PC-9 (cell line): ENCODE measurements at regions of chr19 and their contacts with region 1.

Region 1: DNA sequence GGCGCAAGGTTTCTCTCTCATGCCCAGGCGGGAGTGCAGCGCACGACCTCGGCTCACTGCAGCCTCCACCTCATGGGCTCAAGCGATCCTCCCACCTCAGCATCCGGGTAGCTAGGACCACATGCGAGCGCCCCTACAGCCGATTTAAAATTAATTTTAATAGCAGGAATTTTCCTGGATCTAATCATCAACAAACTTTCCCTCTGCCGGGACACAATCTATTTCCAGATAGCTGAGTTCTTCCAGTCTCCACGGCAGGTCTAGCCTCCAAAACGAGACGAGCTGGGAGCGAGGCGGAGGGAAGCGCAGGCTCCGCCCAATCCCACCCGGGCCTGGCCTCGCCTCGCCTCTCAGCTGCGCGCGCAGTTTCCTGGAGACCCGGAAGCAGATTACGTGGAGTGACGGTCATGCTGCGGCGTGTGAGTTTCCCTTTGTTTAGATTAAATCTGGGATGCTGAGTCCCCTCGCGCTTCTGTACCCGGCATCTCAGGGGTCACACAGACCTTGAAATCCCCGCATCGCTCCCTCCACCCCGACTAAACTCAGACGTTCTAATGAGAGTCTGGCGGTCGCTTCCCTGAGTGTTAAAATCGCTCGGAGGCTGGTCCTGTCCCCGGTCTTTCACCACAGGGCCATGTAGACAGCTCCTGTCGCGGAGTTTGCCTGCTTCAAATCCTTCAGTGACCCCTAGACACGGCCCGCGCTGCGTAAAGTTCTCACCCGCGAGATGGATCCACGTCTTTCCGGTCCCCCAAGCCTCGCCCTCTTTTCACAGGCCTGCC is at the start of gene ZNF880:
- DNase-seq: peak; percentile 78 to 95
- H3K4me3 ChIP-seq: peak within 1 kb of the TSS; percentile 78
- H3K27ac ChIP-seq: peak within 1 kb of the TSS; percentile 67
- H3K4me1 ChIP-seq: 0 out of 2 replicates have a peak, but pooled peaks cover 8% of the 10 kb centered on the region
- H3K27me3 ChIP-seq: no peaks in the 10 kb centered on the region
- CTCF ChIP-seq: no peak
- total RNA-seq, gene ZNF880: 20.8 and 27.3 TPM in 2 replicates

Region 2: GRCh38 chr19:52269338-52270261 is 100.2 kb before region 1 on chr19 and contains the start of gene ZNF766:
- CTCF ChIA-PET with region 1: no interaction called
- POLR2A ChIA-PET with region 1: no interaction called
- intact Hi-C with region 1: loop called (anchors 5 kb)
- DNase-seq: peak; percentile 89 to 98
- H3K4me3 ChIP-seq: peak within 1 kb of the TSS; percentile 81
- H3K27ac ChIP-seq: peak within 1 kb of the TSS; percentile 81
- H3K4me1 ChIP-seq: 0 out of 2 replicates have a peak, but pooled peaks cover 4% of the 10 kb centered on the region
- H3K27me3 ChIP-seq: no peaks in the 10 kb centered on the region
- CTCF ChIP-seq: 0 out of 2 replicates have a peak, but pooled peaks have one; percentile 8
- total RNA-seq, gene ZNF766: 18.3 and 18.8 TPM in 2 replicates

Region 3: GRCh38 chr19:52296773-52297600 is 72.8 kb before region 1 on chr19 and contains the start of gene ZNF480:
- CTCF ChIA-PET with region 1: no interaction called
- POLR2A ChIA-PET with region 1: no interaction called
- intact Hi-C with region 1: loop called (anchors 1 kb)
- DNase-seq: peak; percentile 65 to 76
- H3K4me3 ChIP-seq: peak within 1 kb of the TSS; percentile 74
- H3K27ac ChIP-seq: peak within 1 kb of the TSS; percentile 38
- H3K4me1 ChIP-seq: peaks cover 9% of the 10 kb centered on the region; the same call in 1 of the 2 replicates
- H3K27me3 ChIP-seq: no peaks in the 10 kb centered on the region
- CTCF ChIP-seq: no peak
- total RNA-seq, gene ZNF480: 8.7 and 10.2 TPM in 2 replicates